Gastrocnemius medialis (tissue), 4 donors: ENCODE measurements at regions of chr5 and their contacts with region 1.

Region 1: GRCh38 chr5:149485655-149486425 is 65.4 kb downstream of the CSNK1A1 start:
- DNase-seq: peak; percentile 91 to 94
- ATAC-seq: peak; percentile 88 to 90
- H3K4me3 ChIP-seq: no peak overlapping the region
- H3K27ac ChIP-seq: peak overlapping the region; percentile 84 to 87 (median 85)
- H3K4me1 ChIP-seq: peaks cover 57 to 63% of the 10 kb centered on the region in 2 donors
- H3K27me3 ChIP-seq: no peaks in the 10 kb centered on the region
- CTCF ChIP-seq: no peak
- POLR2A ChIP-seq: peak in 1 of 2 donors; percentile 12

Region 2: GRCh38 chr5:149452007-149452664 is 33.7 kb before region 1 on chr5:
- in situ Hi-C with region 1: no loop called
- intact Hi-C with region 1: loop called (anchors 2 kb)
- DNase-seq: no peak
- ATAC-seq: no peak
- H3K4me3 ChIP-seq: no peak overlapping the region
- H3K27ac ChIP-seq: peak overlapping the region; percentile 85 to 98 (median 96)
- H3K4me1 ChIP-seq: peaks cover 53 to 82% of the 10 kb centered on the region in 2 donors
- H3K27me3 ChIP-seq: no peaks in the 10 kb centered on the region
- CTCF ChIP-seq: no peak
- POLR2A ChIP-seq: no peak

Region 3: DNA sequence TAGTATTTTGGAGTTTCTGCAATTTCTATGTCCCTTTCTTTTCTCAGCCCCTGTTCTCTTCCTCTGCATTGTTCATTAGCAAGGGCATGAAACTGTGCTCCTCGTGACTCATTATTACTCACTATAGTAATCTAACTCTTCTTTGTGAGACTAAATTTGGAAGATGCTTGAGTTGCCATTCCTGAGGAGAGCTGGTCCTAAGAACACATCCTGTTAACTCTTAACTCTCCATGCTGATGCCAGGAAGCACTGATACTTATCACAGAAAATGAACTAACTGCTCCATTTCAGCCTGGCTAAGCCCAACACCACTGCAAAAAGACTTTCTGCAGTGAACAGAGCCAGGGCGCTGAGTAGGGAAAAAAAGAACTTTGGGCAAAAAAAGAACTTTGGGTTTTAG is 76.0 kb after region 1 on chr5:
- in situ Hi-C with region 1: no loop called
- intact Hi-C with region 1: no loop called
- DNase-seq: peak in 1 of 2 donors; percentile 27
- ATAC-seq: peak; percentile 96 to 98
- H3K4me3 ChIP-seq: peak overlapping the region in 3 of 4 donors; percentile 3 to 8 (median 4)
- H3K27ac ChIP-seq: peak overlapping the region; percentile 74 to 83 (median 80)
- H3K4me1 ChIP-seq: peaks cover 20 to 35% of the 10 kb centered on the region in 2 donors
- H3K27me3 ChIP-seq: no peaks in the 10 kb centered on the region
- CTCF ChIP-seq: no peak
- POLR2A ChIP-seq: no peak